ENCODE measurements at regions of chr4 and their contacts with region 1.

Region 1: DNA sequence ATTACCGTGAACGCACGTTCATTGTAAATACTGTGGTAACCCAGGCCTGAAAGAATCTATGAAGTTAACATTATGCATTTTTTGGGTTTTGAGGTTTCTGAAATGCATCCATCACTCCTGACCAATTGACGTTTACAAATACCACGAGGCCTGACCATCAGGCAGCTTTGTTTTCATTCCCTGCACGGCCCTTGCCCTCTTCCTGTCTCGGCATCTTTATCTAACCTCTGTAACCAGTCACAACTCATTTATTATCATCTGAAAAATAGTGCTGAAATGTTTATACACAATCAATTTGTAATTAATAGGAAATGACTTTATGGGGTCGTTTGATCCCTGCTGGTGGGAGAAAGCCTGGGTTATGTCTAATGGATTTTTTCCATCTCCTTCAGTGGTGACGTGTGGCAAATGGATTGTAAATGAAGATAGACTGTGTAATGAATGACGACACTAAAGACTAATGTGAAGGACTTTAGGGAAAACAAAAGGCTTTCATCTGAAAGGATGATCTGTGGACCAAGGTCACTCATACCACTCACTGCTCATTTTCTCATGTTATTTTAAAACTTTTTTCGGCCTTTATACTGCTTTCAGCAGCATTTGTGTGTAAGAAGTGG is 102.7 kb upstream of the SORBS2 start:
- DNase-seq: no peak
- ATAC-seq: no peak
- H3K4me3 ChIP-seq: no peak overlapping the region
- H3K27ac ChIP-seq: no peak overlapping the region
- H3K4me1 ChIP-seq: peaks cover 47% of the 10 kb centered on the region
- H3K27me3 ChIP-seq: no peaks in the 10 kb centered on the region
- CTCF ChIP-seq: no peak

Region 2: GRCh38 chr4:185405296-185405999 is 509.2 kb before region 1 on chr4:
- CTCF ChIA-PET with region 1: no interaction called
- POLR2A ChIA-PET with region 1: no interaction called
- intact Hi-C with region 1: no loop called
- DNase-seq: no peak
- ATAC-seq: no peak
- H3K4me3 ChIP-seq: no peak overlapping the region
- H3K27ac ChIP-seq: no peak overlapping the region
- H3K4me1 ChIP-seq: no peaks in the 10 kb centered on the region
- H3K27me3 ChIP-seq: no peaks in the 10 kb centered on the region
- CTCF ChIP-seq: no peak

Region 3: GRCh38 chr4:185708348-185708747 is 206.3 kb before region 1 on chr4:
- CTCF ChIA-PET with region 1: no interaction called
- POLR2A ChIA-PET with region 1: no interaction called
- intact Hi-C with region 1: no loop called
- DNase-seq: peak; percentile 58
- ATAC-seq: peak; percentile 70
- H3K4me3 ChIP-seq: no peak overlapping the region
- H3K27ac ChIP-seq: peak overlapping the region; percentile 55
- H3K4me1 ChIP-seq: peaks cover 14% of the 10 kb centered on the region; the same call in 1 of the 2 replicates
- H3K27me3 ChIP-seq: no peaks in the 10 kb centered on the region
- CTCF ChIP-seq: no peak

Region 4: GRCh38 chr4:185839194-185839712 is 75.4 kb before region 1 on chr4:
- CTCF ChIA-PET with region 1: no interaction called
- POLR2A ChIA-PET with region 1: interaction called, 12 read pairs
- intact Hi-C with region 1: loop called (anchors 2 kb)
- DNase-seq: peak; percentile 89
- ATAC-seq: peak; percentile 93
- H3K4me3 ChIP-seq: peak overlapping the region; percentile 9; the same call in 1 of the 2 replicates
- H3K27ac ChIP-seq: peak overlapping the region; percentile 71
- H3K4me1 ChIP-seq: peaks cover 23% of the 10 kb centered on the region
- H3K27me3 ChIP-seq: no peaks in the 10 kb centered on the region
- CTCF ChIP-seq: no peak

Region 5: DNA sequence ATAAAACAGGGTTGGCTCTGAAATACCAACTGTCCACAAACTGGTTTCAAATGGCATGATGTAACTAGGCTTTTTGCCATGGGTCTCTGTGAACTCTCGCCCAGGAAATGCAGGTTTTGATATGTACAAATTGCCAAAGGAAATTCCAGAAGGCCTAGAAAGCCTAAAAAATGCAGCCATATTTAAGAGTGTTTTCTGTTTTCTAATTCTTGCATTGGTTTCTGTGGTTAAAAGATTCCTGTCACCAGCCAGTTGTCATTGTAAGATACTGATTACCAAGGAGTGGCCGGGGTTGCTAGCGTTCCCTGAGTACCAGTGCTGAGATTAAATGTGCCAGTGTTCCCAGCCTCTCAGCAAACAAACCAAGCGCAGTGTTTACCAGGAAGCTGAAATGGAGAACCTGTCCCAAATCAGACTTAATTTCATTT is 48.8 kb before region 1 on chr4:
- CTCF ChIA-PET with region 1: no interaction called
- POLR2A ChIA-PET with region 1: no interaction called
- intact Hi-C with region 1: loop called (anchors 5 kb)
- DNase-seq: peak; percentile 80
- ATAC-seq: peak; percentile 71
- H3K4me3 ChIP-seq: peak overlapping the region; percentile 17; the same call in 1 of the 2 replicates
- H3K27ac ChIP-seq: peak overlapping the region; percentile 78
- H3K4me1 ChIP-seq: peaks cover 27% of the 10 kb centered on the region
- H3K27me3 ChIP-seq: no peaks in the 10 kb centered on the region
- CTCF ChIP-seq: no peak

Region 6: GRCh38 chr4:185881427-185881826 is 33.3 kb before region 1 on chr4:
- CTCF ChIA-PET with region 1: no interaction called
- POLR2A ChIA-PET with region 1: no interaction called
- intact Hi-C with region 1: no loop called
- DNase-seq: no peak
- ATAC-seq: no peak
- H3K4me3 ChIP-seq: no peak overlapping the region
- H3K27ac ChIP-seq: no peak overlapping the region
- H3K4me1 ChIP-seq: peaks cover 5% of the 10 kb centered on the region; the same call in 1 of the 2 replicates
- H3K27me3 ChIP-seq: no peaks in the 10 kb centered on the region
- CTCF ChIP-seq: no peak

Region 7: DNA sequence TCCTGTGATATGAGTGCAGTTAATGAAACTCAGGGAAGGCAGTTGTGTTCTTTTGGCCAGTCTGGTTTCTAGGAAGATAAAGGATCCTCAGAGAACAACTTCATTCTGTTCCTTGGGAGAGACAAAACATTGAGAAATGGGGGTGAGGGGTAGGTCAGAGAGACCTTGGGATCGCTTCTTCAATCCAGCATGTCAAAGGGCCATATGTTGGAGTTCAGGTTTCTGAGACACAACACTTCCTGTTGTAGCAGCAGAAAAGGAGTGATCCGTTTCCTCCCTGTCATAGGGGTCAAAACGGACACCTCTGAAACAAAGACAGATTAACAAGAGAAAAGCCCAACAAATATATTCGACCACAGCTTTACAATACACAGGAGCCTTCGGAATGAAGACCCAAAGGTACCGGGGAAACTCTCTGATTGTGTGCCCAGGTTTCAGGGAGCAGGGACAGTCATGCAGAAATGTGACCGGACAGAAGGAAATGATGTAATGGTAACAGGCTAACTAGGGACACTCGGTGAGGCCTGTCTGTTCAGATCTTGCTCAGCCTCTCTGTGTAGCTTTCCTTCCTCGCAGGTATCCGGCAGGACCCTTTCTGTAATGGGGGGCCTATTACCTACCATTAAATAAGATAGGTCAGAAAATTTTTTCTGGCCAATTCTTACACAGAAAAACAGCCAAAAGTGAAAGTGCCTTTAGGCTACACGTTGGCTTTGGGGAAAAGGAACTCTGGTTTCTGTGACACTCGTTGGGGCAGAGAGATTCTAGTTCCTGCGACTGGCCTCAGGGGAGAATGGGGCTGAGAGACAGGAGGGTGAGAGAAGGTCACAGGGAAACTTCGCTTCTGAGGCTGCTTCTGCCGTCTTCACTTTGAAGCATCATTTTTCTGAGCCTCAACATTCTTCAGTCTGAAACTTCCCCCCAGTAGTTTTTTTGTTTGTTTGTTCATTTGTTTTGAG is 51.0 kb after region 1 on chr4:
- CTCF ChIA-PET with region 1: no interaction called
- POLR2A ChIA-PET with region 1: no interaction called
- intact Hi-C with region 1: loop called (anchors 5 kb)
- DNase-seq: no peak
- ATAC-seq: no peak
- H3K4me3 ChIP-seq: no peak overlapping the region
- H3K27ac ChIP-seq: no peak overlapping the region
- H3K4me1 ChIP-seq: peaks cover 12% of the 10 kb centered on the region
- H3K27me3 ChIP-seq: no peaks in the 10 kb centered on the region
- CTCF ChIP-seq: no peak

Region 8: DNA sequence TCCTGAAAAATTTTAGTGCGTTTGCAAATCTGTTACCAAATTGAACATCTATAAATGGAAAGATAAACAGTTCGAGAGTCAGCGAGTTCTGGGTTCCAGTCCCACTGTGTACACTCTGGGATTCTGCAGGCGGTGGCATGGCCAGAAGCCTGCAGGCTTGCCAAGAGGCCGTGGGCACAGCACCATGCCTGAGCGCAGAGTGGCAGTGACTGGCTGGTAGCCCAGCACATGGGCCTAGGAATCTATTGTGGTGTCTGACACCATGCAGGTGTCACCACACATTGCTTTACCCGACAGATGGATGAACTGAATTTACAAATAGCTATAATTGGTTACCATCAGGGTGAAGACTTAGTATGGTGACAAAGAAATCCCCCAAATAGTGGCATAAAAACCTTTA is 82.6 kb after region 1 on chr4:
- CTCF ChIA-PET with region 1: no interaction called
- POLR2A ChIA-PET with region 1: no interaction called
- intact Hi-C with region 1: no loop called
- DNase-seq: no peak
- ATAC-seq: no peak
- H3K4me3 ChIP-seq: no peak overlapping the region
- H3K27ac ChIP-seq: no peak overlapping the region
- H3K4me1 ChIP-seq: no peaks in the 10 kb centered on the region
- H3K27me3 ChIP-seq: no peaks in the 10 kb centered on the region
- CTCF ChIP-seq: no peak

Measured in PC-3 (cell line).